ENCODE measurements at regions of chr13 and their contacts with region 1.

Region 1: DNA sequence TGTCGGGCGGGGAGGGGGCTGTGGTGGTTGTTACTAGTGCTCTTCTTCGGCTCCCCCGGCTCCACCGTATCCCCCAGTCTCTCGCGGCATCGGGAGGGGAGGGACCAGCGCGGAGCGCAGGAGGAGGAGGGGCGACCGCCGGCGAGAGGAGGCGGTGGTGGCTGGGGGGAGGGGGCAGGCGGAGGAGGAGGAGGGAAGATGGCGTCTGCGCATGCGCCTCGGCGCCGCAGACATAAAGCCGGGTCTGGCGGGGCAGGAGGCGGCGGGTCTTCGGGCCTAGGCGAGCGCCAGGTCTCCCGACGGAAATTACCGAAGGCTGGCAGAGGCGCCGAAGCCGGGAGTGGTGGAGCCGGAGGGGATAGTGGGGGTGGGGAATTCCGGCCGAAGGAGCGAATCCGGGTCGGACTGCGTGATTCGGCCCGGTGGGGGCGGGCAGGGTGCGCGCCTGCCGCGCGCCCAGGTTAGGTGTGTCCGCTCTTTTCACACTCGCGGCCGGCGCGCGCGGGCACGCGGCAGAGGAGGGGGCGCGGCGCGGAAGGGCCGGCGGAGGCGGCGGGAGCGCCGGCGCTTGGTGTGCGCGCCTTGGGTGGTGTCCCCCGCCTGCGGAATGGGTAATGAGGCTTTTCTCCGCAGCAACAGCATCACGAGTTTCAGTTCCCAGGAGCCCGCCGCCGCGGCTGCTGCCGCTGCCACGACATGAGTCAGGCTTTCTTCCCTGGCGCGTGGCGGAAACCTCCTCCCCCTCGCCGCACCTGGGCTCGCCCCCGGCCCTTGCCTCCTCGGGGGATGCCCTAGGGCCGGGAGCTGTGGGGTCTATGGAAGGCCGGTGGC is 1.3 kb upstream of the TSC22D1 start:
- DNase-seq: peak; percentile 80 to 98 (median 95)

Region 2: GRCh38 chr13:44088991-44089413 is 488.4 kb before region 1 on chr13:
- intact Hi-C with region 1: no loop called
- DNase-seq: no peak

Region 3: DNA sequence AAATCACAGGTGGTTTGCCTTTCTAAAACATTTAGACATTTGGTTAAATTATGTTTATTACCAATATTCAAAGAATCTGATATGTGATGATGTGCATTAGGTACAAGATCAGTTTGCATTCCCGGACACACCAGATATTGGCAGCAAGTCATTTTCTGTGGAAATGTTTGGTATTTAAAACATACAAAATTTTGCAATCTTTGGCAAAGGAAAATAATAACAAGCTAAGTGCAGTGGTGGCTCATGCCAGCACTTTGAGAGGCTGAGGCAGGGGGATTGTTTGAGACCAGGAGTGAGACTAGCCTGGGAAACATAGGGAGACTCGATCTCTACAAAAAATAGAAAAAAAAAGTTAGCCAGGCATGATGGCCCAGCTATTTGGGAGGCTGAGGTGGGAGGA is 27.8 kb after region 1 on chr13:
- intact Hi-C with region 1: no loop called
- DNase-seq: no peak

Region 4: DNA sequence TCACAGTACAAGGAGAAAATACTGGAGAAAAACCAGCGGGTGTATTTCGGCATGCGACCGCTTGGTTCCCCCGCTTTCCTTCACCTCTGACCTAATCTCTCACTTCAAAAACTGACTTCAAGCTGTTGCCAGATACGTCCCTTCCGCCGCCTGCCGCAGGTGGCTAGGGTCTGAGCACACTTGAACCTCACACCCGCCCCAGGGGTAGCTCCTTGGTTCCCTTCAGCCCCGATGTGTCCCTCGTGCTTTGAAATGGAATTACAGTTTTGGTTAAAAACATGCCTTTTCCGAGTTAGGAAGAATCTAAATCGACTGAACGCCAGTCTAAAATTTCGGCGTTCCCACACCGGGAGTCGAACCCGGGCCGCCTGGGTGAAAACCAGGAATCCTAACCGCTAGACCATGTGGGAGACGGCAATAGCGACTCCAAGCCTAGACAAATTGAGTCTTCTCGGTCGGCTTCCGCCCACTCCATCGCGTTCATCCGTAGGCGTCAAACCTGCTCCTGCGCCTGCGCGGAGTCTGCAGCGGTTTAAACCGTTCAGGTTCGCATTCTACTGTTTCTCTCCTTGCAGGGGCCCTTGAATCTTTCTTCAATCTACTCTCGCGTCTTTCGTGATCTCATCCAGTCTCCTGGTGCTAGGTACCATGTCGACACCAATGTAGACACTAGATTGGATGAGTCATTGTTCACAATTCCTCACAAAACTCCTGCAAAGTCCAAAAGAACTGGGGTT is 340.3 kb after region 1 on chr13:
- intact Hi-C with region 1: loop called (anchors 2 kb)
- DNase-seq: peak; percentile 88 to 99 (median 96)

Region 5: DNA sequence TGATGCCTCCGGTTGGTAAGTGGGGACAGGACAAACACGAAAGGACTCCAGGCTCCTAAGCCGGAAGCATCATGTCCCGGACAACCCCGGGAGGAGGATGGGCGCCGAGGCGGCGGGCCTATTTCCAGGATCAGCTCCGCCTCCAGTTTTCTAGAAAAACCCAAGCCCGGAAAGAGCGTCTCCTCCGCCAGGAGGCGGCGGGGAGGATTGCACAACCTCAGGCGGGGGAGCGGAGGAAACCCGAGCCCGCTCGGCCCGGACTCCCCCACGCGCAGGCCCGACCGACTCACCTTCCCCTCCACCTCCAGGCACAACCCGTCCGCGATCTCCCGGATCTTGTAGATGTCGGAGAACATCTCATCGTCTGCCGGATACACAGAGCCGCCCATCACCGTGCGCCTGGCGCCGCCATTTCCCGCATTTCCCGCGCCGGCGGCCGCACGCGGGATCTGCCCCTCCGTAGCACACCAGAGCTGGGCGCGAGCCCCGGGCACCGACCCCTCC is 763.0 kb after region 1 on chr13:
- intact Hi-C with region 1: loop called (anchors 10 kb)
- DNase-seq: peak; percentile 71 to 96 (median 89)